ENCODE measurements at regions of chr5 and their contacts with region 1.

Region 1: DNA sequence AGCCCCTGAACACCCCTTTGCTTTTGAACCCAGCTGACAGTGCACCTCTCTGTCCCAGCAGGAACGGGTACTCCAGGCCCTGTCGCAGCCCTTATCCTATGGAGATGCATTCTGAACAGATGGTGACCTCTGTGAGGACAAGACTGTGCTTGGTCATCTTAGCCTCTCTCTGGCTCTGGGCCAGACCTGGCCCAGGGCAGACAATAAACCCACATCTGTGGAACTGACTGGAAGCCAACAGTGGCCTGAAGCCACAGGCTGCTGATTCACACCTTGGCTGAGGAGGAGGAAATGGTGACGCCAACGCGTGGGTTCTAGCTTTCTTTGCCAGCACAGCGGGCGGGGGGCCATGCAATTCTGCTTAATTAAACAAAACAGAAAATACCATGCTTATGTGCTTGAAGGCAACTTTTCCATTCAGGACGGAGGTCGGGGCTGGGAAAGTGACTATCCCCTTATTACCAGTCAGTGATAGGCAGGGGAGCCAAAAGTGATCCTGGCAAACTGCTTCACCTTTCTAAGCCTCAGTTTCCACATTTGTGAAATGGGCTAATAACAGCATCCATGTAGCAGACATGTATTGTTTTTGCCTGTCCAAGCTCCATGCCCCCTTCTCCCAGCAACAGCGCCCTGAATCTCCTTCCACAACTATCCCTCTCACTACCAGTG is 10.8 kb downstream of the SH3PXD2B start:
- H3K4me3 Mint-ChIP-seq: no peak overlapping the region
- H3K27ac Mint-ChIP-seq: no peak overlapping the region
- H3K4me1 Mint-ChIP-seq: peaks cover 33% of the 10 kb centered on the region
- H3K27me3 Mint-ChIP-seq: peaks cover 56% of the 10 kb centered on the region

Region 2: GRCh38 chr5:172322028-172322965 is 121.3 kb before region 1 on chr5:
- intact Hi-C with region 1: loop called (anchors 10 kb)
- H3K4me3 Mint-ChIP-seq: no peak overlapping the region
- H3K27ac Mint-ChIP-seq: no peak overlapping the region
- H3K4me1 Mint-ChIP-seq: peaks cover 6% of the 10 kb centered on the region
- H3K27me3 Mint-ChIP-seq: peaks cover 1% of the 10 kb centered on the region

Region 3: DNA sequence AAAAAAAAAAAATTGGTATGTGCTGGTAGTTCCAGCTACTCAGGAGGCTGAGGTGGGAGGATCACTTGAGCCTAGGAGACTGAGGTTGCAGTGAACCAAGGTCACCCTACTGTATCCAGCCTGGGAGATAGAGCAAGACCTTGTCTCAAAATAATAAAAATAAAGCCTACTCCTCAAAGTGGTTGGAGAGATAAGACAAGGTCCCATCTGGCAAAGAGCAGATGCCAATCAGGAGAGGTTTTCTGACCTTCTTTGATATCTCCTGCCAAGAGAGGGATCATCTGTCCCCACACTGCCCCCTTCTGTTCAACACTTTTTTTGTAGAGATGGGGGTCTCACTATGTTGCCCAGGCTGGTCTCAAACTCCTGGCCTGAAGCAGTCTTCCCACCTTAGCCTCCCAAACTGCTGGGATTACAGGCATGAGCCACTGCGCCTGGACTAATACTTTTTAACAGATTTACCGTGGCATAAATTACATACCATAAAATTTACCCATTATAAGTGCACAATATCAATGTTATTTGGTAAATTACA is 53.9 kb before region 1 on chr5:
- intact Hi-C with region 1: loop called (anchors 10 kb)
- H3K4me3 Mint-ChIP-seq: no peak overlapping the region
- H3K27ac Mint-ChIP-seq: no peak overlapping the region
- H3K4me1 Mint-ChIP-seq: no peaks in the 10 kb centered on the region
- H3K27me3 Mint-ChIP-seq: peaks cover 11% of the 10 kb centered on the region

Region 4: DNA sequence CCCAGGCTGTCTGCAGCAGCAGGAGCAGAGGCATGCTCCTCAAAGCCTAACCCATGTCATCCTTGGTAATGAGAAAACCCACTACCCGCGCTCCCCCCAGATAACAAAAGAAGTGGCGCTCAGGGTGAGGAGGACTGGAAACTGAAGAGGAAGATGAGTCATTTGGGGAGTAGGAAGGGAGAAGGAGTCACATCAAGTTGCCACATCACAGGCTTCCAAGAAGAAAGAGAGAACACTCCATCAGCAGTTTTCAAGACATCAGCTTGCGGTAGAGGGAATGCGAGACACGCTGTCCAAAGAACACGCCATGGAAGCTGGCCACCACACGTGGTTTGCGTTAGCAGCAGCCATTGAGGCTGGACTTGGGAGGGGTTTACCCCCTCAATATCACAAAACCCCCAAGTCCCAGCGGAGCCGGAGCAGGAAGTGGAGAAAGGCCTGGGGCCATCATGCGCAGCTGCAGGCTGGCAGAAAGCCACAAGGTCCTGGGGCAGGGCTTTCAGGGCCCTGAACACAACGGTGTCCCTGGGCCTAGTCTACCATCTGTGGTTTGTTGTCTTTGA is 30.8 kb before region 1 on chr5:
- intact Hi-C with region 1: no loop called
- H3K4me3 Mint-ChIP-seq: peak overlapping the region; percentile 44
- H3K27ac Mint-ChIP-seq: peak overlapping the region; percentile 92
- H3K4me1 Mint-ChIP-seq: peaks cover 71% of the 10 kb centered on the region
- H3K27me3 Mint-ChIP-seq: peaks cover 11% of the 10 kb centered on the region